AG04450 (cell line): ENCODE measurements at regions of chr2 and their contacts with region 1.

Region 1: DNA sequence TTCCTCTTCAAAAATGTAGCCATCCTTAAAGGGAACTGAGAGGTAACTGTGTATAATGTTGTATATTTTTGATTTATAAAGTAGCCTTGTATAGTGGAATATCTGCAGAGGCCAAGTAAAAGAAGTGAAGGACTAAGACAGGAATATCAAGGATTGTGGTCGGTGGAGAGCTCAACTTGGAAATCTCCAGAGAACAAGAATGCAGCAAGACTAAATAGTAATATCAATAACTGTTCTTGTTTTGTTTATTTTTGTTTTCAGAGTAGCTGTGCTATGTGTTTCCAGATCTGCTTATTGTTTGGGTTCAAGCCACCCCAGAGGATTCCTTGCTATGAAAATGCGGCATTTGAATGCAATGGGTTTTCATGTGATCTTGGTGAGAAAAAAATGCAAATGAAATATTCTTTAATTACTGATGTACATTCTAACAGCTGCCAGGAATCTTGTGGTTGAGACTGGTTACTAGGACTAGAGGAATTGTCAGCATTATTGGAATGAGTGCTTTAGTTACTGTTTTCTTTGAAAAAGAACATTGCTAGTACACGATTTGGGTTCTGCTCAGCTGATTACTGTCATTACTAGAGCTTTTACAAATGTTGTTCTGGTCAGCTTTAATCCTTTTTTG is 25.0 kb downstream of the FASTKD2 start:
- DNase-seq: no peak
- H3K4me3 ChIP-seq: no peak overlapping the region
- H3K27ac ChIP-seq: no peak overlapping the region
- H3K27me3 ChIP-seq: no peaks in the 10 kb centered on the region
- CTCF ChIP-seq: no peak

Region 2: GRCh38 chr2:206774871-206775270 is 15.6 kb before region 1 on chr2:
- CTCF ChIA-PET with region 1: no interaction called
- POLR2A ChIA-PET with region 1: no interaction called
- DNase-seq: no peak
- H3K4me3 ChIP-seq: no peak overlapping the region
- H3K27ac ChIP-seq: no peak overlapping the region
- H3K27me3 ChIP-seq: no peaks in the 10 kb centered on the region
- CTCF ChIP-seq: no peak

Region 3: GRCh38 chr2:206800506-206801417 is 10.3 kb after region 1 on chr2:
- CTCF ChIA-PET with region 1: interaction called, 16 read pairs
- POLR2A ChIA-PET with region 1: no interaction called
- DNase-seq: peak; percentile 26
- H3K4me3 ChIP-seq: no peak overlapping the region
- H3K27ac ChIP-seq: no peak overlapping the region
- H3K27me3 ChIP-seq: no peaks in the 10 kb centered on the region
- CTCF ChIP-seq: peak; percentile 66